HCT116 (cell line): ENCODE measurements at regions of chr7 and their contacts with region 1.

Region 1: GRCh38 chr7:102404005-102404861 is 8.1 kb downstream of the PRKRIP1 start:
- DNase-seq: peak; percentile 35
- ATAC-seq: peak; percentile 99
- H3K4me3 ChIP-seq: no peak overlapping the region
- H3K27ac ChIP-seq: no peak overlapping the region
- H3K4me1 ChIP-seq: no peaks in the 10 kb centered on the region
- H3K27me3 ChIP-seq: no peaks in the 10 kb centered on the region
- CTCF ChIP-seq: peak; percentile 47 to 74 (median 64); a peak in 5 of 6 replicates
- POLR2A ChIP-seq: no peak
- RAD21 ChIP-seq: peak; percentile 69

Region 2: DNA sequence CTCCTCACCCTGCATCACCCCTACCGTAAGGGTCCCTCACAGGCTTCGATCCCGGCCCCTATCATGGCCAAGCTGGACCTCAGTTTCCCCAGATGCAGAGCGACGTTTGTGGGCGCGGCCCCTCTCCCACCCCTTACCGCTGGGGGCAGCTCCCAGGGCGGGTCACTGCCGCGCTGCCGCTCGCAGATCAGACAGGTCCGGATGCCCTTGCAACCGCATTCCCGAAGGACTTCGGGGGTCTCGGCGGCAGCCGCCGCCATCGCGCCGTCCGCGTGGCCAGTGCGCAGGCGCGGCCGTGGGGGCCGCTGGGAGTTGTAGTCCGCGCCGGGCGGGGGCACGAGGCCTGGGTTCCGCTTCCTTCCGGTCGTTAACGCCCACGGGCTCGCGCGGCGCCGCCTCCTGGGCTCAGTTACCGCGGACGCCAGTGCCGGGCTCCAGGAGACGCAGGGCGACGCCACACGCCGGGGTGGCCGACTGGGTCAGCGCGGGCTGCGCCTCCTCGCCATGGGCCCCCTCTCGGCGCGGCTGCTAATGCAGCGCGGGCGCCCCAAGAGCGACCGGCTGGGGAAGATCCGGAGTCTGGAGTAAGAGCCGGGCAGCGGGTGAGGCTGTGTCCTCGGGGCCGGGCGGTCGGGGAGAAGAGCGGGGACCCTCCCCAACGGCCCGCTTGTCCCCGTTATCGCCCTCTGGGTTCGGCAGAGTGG is 60.5 kb after region 1 on chr7 and contains the starts of genes ALKBH4 and LRWD1:
- CTCF ChIA-PET with region 1: no interaction called
- POLR2A ChIA-PET with region 1: no interaction called
- RAD21 ChIA-PET with region 1: no interaction called
- intact Hi-C with region 1: loop called (anchors 2 kb)
- DNase-seq: peak; percentile 76
- ATAC-seq: peak; percentile 92
- H3K4me3 ChIP-seq: peak within 1 kb of the TSS; percentile 93 to 99
- H3K27ac ChIP-seq: peak within 1 kb of the TSS; percentile 75
- H3K4me1 ChIP-seq: peaks cover 5 to 17% of the 10 kb centered on the region in 2 experiments; a peak in 2 of 4 replicates
- H3K27me3 ChIP-seq: no peaks in the 10 kb centered on the region
- CTCF ChIP-seq: 0 out of 6 replicates have a peak, but pooled peaks of 1 of the 3 experiments have one; percentile 12
- POLR2A ChIP-seq: peak; percentile 90
- RAD21 ChIP-seq: peak; percentile 17; the same call in 1 of the 2 replicates
- total RNA-seq, gene ALKBH4: 14.9 TPM
- total RNA-seq, gene LRWD1: 39.5 TPM